Heart right ventricle (tissue), 16 donors: ENCODE measurements at regions of chrX and their contacts with region 1.

Region 1: GRCh38 chrX:17046478-17047097 is 100.1 kb downstream of the REPS2 start:
- DNase-seq: peak in 1 of 2 donors; percentile 53
- ATAC-seq: peak in 7 of 8 donors; percentile 61 to 85 (median 76)
- H3K4me3 ChIP-seq: no peak overlapping the region
- H3K27ac ChIP-seq: no peak overlapping the region
- H3K4me1 ChIP-seq: no peaks in the 10 kb centered on the region
- H3K27me3 ChIP-seq: peaks cover 0 to 33% (median 0%) of the 10 kb centered on the region in 7 donors
- CTCF ChIP-seq: peak; percentile 37 to 76 (median 67)

Region 2: GRCh38 chrX:16826207-16826606 is 220.4 kb before region 1 on chrX:
- intact Hi-C with region 1: loop called in 9 of 10 experiments (anchors 2 to 10 kb)
- DNase-seq: no peak
- ATAC-seq: peak in 1 of 8 donors; percentile 27
- H3K4me3 ChIP-seq: no peak overlapping the region
- H3K27ac ChIP-seq: peak overlapping the region in 1 of 10 donors; percentile 31
- H3K4me1 ChIP-seq: peaks cover 0 to 12% (median 3%) of the 10 kb centered on the region in 9 donors
- H3K27me3 ChIP-seq: peaks cover 0 to 4% (median 0%) of the 10 kb centered on the region in 7 donors
- CTCF ChIP-seq: peak in 8 of 9 donors; percentile 13 to 64 (median 54)

Region 3: GRCh38 chrX:16882702-16883486 is 163.7 kb before region 1 on chrX:
- intact Hi-C with region 1: loop called in 8 of 10 experiments (anchors 5 to 10 kb)
- DNase-seq: peak; percentile 47 to 55
- ATAC-seq: peak; percentile 74 to 90 (median 86)
- H3K4me3 ChIP-seq: peak overlapping the region; percentile 28 to 62 (median 52)
- H3K27ac ChIP-seq: peak overlapping the region in 8 of 10 donors; percentile 4 to 65 (median 56)
- H3K4me1 ChIP-seq: peaks cover 0 to 5% (median 0%) of the 10 kb centered on the region in 9 donors
- H3K27me3 ChIP-seq: peaks cover 0 to 98% (median 0%) of the 10 kb centered on the region in 7 donors
- CTCF ChIP-seq: peak in 8 of 9 donors; percentile 33 to 70 (median 60)

Region 4: GRCh38 chrX:16892504-16893362 is 153.9 kb before region 1 on chrX:
- intact Hi-C with region 1: loop called in 8 of 10 experiments (anchors 5 to 10 kb)
- DNase-seq: peak; percentile 18 to 72
- ATAC-seq: peak in 7 of 8 donors; percentile 69 to 85 (median 79)
- H3K4me3 ChIP-seq: no peak overlapping the region
- H3K27ac ChIP-seq: no peak overlapping the region
- H3K4me1 ChIP-seq: peaks cover 0 to 4% (median 0%) of the 10 kb centered on the region in 9 donors
- H3K27me3 ChIP-seq: peaks cover 0 to 87% (median 0%) of the 10 kb centered on the region in 7 donors
- CTCF ChIP-seq: peak; percentile 41 to 88 (median 77)

Region 5: GRCh38 chrX:17007206-17007683 is 39.3 kb before region 1 on chrX:
- intact Hi-C with region 1: loop called in 1 of 10 experiments (anchors 5 kb)
- DNase-seq: no peak
- ATAC-seq: peak in 1 of 8 donors; percentile 28
- H3K4me3 ChIP-seq: no peak overlapping the region
- H3K27ac ChIP-seq: no peak overlapping the region
- H3K4me1 ChIP-seq: no peaks in the 10 kb centered on the region
- H3K27me3 ChIP-seq: peaks cover 0 to 45% (median 0%) of the 10 kb centered on the region in 7 donors
- CTCF ChIP-seq: peak in 6 of 9 donors; percentile 16 to 41 (median 27)